ENCODE measurements at regions of chr15 and their contacts with region 1.

Region 1: DNA sequence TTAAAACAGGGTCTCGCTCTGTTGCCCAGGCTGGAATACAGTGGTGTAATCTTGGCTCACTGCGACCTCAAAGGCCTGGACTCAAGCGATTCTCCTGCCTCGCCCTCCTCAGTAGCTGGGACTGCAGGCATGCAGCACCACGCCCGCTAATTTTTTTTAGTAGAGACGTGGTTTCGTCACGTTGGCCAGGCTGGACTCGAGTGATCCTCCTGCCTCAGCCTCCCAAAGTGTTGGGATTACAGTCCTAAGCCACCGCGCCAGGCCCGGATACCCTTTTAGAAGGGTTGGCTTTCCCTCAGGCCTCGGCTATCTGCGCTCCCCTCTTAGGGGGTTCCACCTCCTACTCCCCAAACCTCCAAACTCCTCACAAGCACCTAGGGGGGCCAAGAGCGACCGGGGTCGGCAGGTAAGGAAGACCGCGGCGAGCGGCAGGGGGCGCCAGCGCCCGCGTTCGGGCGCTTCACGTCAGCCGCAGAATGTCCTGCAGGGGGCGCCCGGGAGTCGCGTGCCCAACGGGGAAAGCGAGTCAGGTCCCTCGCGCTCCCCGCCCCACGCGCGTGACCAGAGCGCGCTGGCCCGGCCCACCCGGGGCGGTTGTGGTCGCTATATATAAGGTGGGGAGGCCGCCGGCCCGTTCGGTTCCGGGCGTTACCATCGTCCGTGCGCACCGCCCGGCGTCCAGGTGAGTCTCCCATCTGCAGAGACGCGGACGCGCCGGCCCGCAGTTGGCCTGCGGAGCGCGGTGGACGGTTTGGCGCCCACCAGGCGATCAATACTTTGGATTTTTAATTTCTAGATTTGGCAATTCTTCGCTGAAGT is 51.8 kb upstream of the GATM start:
- DNase-seq: peak; percentile 69 to 90 (median 90)
- ATAC-seq: peak; percentile 81 to 85
- H3K4me3 ChIP-seq: peak overlapping the region; percentile 58
- H3K27ac ChIP-seq: no peak overlapping the region
- H3K4me1 ChIP-seq: no peaks in the 10 kb centered on the region
- H3K27me3 ChIP-seq: no peaks in the 10 kb centered on the region

Region 2: GRCh38 chr15:45022871-45023658 is 407.1 kb before region 1 on chr15 and contains the start of gene SORD:
- intact Hi-C with region 1: no loop called
- DNase-seq: peak; percentile 96 to 98 (median 98)
- ATAC-seq: peak; percentile 100
- H3K4me3 ChIP-seq: peak within 1 kb of the TSS; percentile 61
- H3K27ac ChIP-seq: peak within 1 kb of the TSS; percentile 4
- H3K4me1 ChIP-seq: peaks cover 3% of the 10 kb centered on the region
- H3K27me3 ChIP-seq: no peaks in the 10 kb centered on the region
- total RNA-seq, gene SORD: 11.0 to 14.7 (median 12.9) TPM

Region 3: GRCh38 chr15:45457641-45458433 is 27.7 kb after region 1 on chr15:
- intact Hi-C with region 1: loop called in 1 of 4 experiments (anchors 2 kb)
- DNase-seq: peak; percentile 31 to 75 (median 68)
- ATAC-seq: peak; percentile 84 to 87
- H3K4me3 ChIP-seq: peak overlapping the region; percentile 94
- H3K27ac ChIP-seq: no peak overlapping the region
- H3K4me1 ChIP-seq: no peaks in the 10 kb centered on the region
- H3K27me3 ChIP-seq: no peaks in the 10 kb centered on the region

Region 4: GRCh38 chr15:45611305-45611704 is 181.1 kb after region 1 on chr15:
- intact Hi-C with region 1: no loop called
- DNase-seq: no peak
- ATAC-seq: no peak
- H3K4me3 ChIP-seq: no peak overlapping the region
- H3K27ac ChIP-seq: no peak overlapping the region
- H3K4me1 ChIP-seq: no peaks in the 10 kb centered on the region
- H3K27me3 ChIP-seq: no peaks in the 10 kb centered on the region

Measured in right cardiac atrium (tissue), 5 donors.